ENCODE measurements at regions of chr3 and their contacts with region 1.

Region 1: GRCh38 chr3:185176750-185177359 is 24.0 kb upstream of the C3orf70 start:
- DNase-seq: peak; percentile 29
- CTCF ChIP-seq: peak; percentile 70

Region 2: GRCh38 chr3:184874709-184875644 is 301.9 kb before region 1 on chr3:
- CTCF ChIA-PET with region 1: interaction called, 23 read pairs
- POLR2A ChIA-PET with region 1: no interaction called
- DNase-seq: peak; percentile 28
- CTCF ChIP-seq: peak; percentile 58

Region 3: DNA sequence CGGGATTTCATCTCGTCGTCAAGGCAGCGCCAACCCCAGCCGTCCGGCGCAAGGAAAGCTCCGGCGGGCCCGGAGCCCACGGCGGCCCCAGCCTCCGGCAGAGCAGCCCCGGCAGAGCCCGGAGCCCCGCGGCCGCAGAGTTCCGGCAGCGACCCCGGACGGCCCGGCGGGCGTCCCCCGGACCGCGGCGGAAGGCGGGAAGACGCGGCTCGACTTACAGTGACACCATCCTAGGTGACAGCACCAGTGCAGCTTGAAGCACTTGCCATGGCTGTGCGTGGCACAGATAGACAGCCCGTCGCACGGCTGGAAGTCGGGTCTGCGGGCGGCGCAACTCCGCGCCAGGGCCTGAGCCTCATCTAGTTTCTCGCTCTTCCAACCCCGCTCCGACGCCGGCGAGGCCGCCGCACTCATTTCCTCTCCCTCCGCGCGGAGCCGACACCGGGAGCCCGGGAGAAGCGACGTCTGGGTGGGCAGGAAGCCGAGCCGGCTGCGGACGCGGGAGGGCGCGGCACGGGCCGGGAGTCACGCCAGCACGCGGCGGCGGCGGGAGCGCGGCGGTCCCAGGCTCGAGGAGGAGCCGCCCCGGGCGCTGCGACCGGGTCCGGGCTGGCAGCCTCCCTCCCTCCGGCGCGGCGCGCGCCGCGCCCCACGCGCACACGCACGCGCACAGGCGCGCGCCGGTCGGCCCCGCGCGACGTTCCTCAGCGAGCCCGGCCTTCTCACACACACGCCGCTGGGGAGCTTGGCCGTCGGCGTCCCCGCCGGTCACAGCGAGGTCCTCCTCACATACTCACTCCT is 24.2 kb before region 1 on chr3 and contains the start of gene C3orf70:
- CTCF ChIA-PET with region 1: interaction called, 12 read pairs
- POLR2A ChIA-PET with region 1: no interaction called
- DNase-seq: peak; percentile 50
- CTCF ChIP-seq: no peak

Region 4: DNA sequence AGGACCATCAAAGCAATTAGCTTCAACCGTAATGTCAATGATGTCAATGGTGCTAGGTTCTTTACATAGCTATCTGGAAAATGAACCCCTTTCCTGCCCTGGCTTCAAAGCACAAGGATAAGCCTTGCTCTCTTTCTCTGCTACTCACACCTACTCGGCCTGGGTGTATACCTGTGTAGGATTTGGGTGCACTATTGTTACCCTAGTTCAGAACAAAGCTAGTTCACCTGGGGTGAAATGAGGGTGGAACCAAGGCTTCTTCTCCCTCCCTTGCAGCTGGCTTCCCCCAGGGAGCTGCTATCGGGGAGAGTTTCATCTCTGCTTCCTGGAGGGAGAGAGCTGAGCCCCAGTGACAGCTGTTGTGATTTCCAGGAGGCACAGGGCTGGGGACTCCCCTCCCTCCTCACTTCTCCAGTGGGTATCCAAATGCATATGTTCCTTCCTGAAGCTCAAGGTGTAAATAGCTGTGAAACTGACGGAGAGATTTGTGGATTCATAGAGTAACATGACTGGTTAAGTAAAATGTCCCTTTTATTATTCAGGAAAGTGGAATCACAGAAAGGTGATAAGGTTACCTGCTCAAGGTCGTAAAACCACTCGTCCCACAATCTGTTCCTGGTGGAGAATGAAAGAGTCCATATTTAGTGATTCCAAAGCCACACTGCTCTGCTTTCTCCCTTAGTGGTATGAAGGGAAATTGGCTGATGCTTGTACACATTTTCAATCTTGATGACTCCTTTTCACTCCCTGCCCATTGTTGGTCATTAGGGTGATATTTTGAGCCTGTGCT is 12.2 kb before region 1 on chr3:
- CTCF ChIA-PET with region 1: interaction called, 13 read pairs
- POLR2A ChIA-PET with region 1: no interaction called
- DNase-seq: no peak
- CTCF ChIP-seq: no peak

Region 5: GRCh38 chr3:185188816-185189215 is 12.0 kb after region 1 on chr3:
- CTCF ChIA-PET with region 1: interaction called, 19 read pairs
- POLR2A ChIA-PET with region 1: no interaction called
- DNase-seq: no peak
- CTCF ChIP-seq: no peak